GM12878 (cell line): ENCODE measurements at regions of chr6 and their contacts with region 1.

Region 1: DNA sequence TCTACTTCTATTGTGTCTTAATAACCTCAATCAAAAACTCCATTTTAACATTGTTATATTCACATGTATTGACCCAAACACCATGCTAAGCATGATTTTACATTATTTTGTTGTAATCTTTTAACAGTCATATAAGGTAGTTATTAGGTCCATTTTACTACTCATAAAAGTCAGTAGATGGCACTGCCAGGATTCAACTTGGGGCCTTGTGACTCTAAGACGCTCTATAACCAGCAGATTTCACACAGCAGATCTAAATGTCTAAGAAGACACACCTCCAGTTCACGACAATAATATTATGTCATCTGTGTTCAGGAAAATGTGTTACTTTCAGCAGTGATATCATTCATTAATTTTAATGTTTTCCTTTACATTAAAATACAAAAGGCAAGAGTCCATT is 88.0 kb downstream of the FRK start:
- DNase-seq: no peak
- ATAC-seq: peak; percentile 75
- H3K4me3 ChIP-seq: no peak overlapping the region
- H3K27ac ChIP-seq: no peak overlapping the region
- H3K4me1 ChIP-seq: no peaks in the 10 kb centered on the region
- H3K27me3 ChIP-seq: no peaks in the 10 kb centered on the region
- CTCF ChIP-seq: peak in 1 of 3 experiments; percentile 3; a peak in 1 of 6 replicates
- EP300 ChIP-seq: no peak
- POLR2A ChIP-seq: no peak
- RAD21 ChIP-seq: peak; percentile 25; the same call in 1 of the 2 replicates

Region 2: GRCh38 chr6:115441651-115442050 is 531.0 kb before region 1 on chr6:
- CTCF ChIA-PET with region 1: interaction called, 3 read pairs
- POLR2A ChIA-PET with region 1: no interaction called
- RAD21 ChIA-PET with region 1: no interaction called
- SMC1A ChIA-PET with region 1: no interaction called
- in situ Hi-C with region 1: no loop called
- intact Hi-C with region 1: loop called (anchors 5 kb)
- DNase-seq: no peak
- ATAC-seq: no peak
- H3K4me3 ChIP-seq: no peak overlapping the region
- H3K27ac ChIP-seq: no peak overlapping the region
- H3K4me1 ChIP-seq: no peaks in the 10 kb centered on the region
- H3K27me3 ChIP-seq: no peaks in the 10 kb centered on the region
- CTCF ChIP-seq: no peak
- EP300 ChIP-seq: no peak
- POLR2A ChIP-seq: no peak
- RAD21 ChIP-seq: no peak